ENCODE measurements at regions of chr1 and their contacts with region 1.

Region 1: GRCh38 chr1:58783993-58784757 is at the start of gene JUN:
- DNase-seq: peak; percentile 100
- H3K4me3 ChIP-seq: peak within 1 kb of the TSS; percentile 79 to 93 (median 91)
- H3K27ac ChIP-seq: peak within 1 kb of the TSS; percentile 98 to 100 (median 100)
- H3K4me1 ChIP-seq: peaks cover 17 to 30% (median 28%) of the 10 kb centered on the region in 4 donors
- H3K27me3 ChIP-seq: no peaks in the 10 kb centered on the region
- CTCF ChIP-seq: peak in 2 of 3 experiments; percentile 24
- EP300 ChIP-seq: peak; percentile 14
- POLR2A ChIP-seq: peak; percentile 95
- total RNA-seq, gene JUN: 77.7 to 126 (median 111) TPM

Region 2: DNA sequence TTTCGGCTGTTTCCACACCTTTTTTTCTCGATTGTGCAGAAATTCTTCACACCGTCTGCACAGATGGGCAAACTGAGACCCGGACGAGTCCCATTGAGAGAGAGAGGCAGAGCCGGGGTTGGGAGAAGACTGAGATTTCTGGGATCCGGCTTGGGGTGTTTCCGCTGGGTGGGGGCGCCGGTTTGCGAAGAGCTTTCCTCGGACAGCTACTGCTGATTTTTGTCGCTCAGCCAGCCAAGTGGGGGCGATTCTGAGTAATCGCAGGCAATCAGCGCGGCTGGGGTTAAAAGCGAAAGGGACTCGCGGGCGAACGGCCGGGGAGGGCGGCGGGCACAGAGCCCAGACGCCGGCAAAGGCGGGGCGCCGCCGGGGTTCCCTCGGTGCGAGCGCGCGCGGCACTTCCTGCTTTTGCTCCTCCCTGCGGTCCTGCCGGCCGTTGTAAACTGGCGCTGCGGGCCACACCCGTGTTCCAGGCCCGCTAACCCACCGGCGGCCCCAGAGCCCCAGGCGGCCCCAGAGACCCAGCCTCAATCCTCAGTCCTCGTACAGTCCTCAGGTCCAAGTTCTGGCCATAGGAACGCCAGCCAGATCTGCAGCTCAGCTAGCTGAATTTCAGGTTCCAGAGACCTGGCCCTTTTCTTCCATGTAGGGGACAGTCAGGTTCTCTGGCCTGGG is 32.0 kb after region 1 on chr1:
- intact Hi-C with region 1: loop called (anchors 2 kb)
- DNase-seq: peak; percentile 95
- H3K4me3 ChIP-seq: peak overlapping the region; percentile 65 to 73 (median 68)
- H3K27ac ChIP-seq: peak overlapping the region; percentile 91 to 96 (median 94)
- H3K4me1 ChIP-seq: peaks cover 27 to 37% (median 34%) of the 10 kb centered on the region in 4 donors
- H3K27me3 ChIP-seq: no peaks in the 10 kb centered on the region
- CTCF ChIP-seq: peak in 2 of 3 experiments; percentile 8 to 22
- EP300 ChIP-seq: peak; percentile 6
- POLR2A ChIP-seq: peak; percentile 26

Region 3: DNA sequence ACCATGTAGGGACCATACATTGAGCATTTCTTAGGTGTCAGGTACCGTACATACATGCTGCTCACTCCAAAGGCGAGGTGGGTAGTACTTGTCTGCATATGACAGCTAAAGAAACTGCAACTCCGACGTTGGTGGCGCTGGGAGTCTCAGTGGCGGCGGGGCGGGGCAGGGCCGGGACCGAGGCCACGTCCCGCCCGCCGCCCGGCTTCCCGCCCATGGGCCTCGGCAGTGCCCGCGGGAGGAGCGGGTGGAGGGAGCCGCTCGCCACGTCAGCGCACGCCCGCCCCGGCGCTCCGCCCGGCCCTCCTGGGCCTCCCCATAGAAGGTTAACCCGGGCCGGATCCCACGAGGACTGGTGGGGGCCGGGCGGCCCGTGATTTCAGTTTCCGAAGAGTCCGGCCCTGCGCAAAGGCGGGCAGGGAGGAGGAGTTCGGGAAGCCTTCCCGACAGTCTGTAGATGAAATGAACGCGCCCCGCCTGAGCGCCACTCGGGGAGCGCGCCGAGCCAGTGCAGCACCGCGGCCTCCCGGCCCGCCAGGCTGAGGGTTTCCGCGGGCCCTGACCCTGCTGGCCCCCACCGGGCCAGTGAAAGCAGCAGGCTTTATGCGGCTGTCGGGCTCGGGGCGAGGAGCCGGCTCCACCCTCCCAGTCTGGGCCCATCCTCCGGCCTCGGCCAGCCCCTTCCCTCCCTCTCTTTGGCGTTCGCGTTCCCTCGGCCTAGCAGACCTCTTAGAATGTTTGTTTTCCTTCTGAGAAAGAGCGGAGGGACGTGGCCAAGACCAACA is 119.5 kb after region 1 on chr1:
- intact Hi-C with region 1: loop called (anchors 5 kb)
- DNase-seq: peak; percentile 98
- H3K4me3 ChIP-seq: peak overlapping the region; percentile 58 to 68 (median 64)
- H3K27ac ChIP-seq: peak overlapping the region; percentile 94 to 99 (median 97)
- H3K4me1 ChIP-seq: peaks cover 19 to 47% (median 30%) of the 10 kb centered on the region in 4 donors
- H3K27me3 ChIP-seq: no peaks in the 10 kb centered on the region
- CTCF ChIP-seq: peak in 1 of 3 experiments; percentile 8
- EP300 ChIP-seq: no peak
- POLR2A ChIP-seq: peak; percentile 76

Region 4: GRCh38 chr1:59150577-59151391 is 366.6 kb after region 1 on chr1:
- intact Hi-C with region 1: loop called (anchors 10 kb)
- DNase-seq: peak; percentile 95
- H3K4me3 ChIP-seq: peak overlapping the region in 3 of 4 donors; percentile 12 to 31 (median 25)
- H3K27ac ChIP-seq: peak overlapping the region; percentile 70 to 85 (median 76)
- H3K4me1 ChIP-seq: peaks cover 31 to 42% (median 35%) of the 10 kb centered on the region in 4 donors
- H3K27me3 ChIP-seq: no peaks in the 10 kb centered on the region
- CTCF ChIP-seq: no peak
- EP300 ChIP-seq: peak; percentile 72
- POLR2A ChIP-seq: no peak

Region 5: GRCh38 chr1:59707178-59707791 is 923.1 kb after region 1 on chr1:
- intact Hi-C with region 1: loop called (anchors 5 kb)
- DNase-seq: no peak
- H3K4me3 ChIP-seq: no peak overlapping the region
- H3K27ac ChIP-seq: peak overlapping the region; percentile 53 to 72 (median 60)
- H3K4me1 ChIP-seq: peaks cover 49 to 63% (median 59%) of the 10 kb centered on the region in 4 donors
- H3K27me3 ChIP-seq: no peaks in the 10 kb centered on the region
- CTCF ChIP-seq: no peak
- EP300 ChIP-seq: no peak
- POLR2A ChIP-seq: no peak

Measured in esophagus muscularis mucosa (tissue), 4 donors.